ENCODE measurements at regions of chrX and their contacts with region 1.

Region 1: DNA sequence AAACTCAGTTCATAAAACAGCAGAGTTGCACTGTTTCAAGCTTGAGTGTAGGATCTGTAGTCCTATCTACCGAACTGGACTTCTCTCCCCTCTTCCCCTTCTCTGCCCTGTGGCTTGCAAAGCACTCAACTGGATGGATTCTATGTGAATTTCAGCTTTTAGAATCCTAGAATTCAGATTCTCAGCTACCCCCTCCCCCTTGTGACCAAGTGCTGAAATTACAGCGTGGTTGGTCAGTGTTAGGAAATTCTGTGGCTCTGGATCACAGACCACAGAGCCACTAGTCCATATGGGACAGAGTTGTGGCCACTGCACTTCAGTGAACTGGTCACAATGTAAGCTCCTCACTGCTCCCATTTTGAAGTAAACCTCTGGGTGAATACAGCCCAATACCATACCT is 64.6 kb upstream of the TRPC5 start:
- DNase-seq: peak; percentile 49
- H3K4me3 Mint-ChIP-seq: no peak overlapping the region
- H3K27ac Mint-ChIP-seq: no peak overlapping the region
- H3K4me1 Mint-ChIP-seq: no peaks in the 10 kb centered on the region
- H3K27me3 Mint-ChIP-seq: peaks cover 42% of the 10 kb centered on the region
- CTCF ChIP-seq: peak; percentile 54

Region 2: GRCh38 chrX:112190646-112191045 is 43.4 kb after region 1 on chrX:
- CTCF ChIA-PET with region 1: no interaction called
- POLR2A ChIA-PET with region 1: no interaction called
- intact Hi-C with region 1: no loop called
- DNase-seq: no peak
- H3K4me3 Mint-ChIP-seq: no peak overlapping the region
- H3K27ac Mint-ChIP-seq: no peak overlapping the region
- H3K4me1 Mint-ChIP-seq: no peaks in the 10 kb centered on the region
- H3K27me3 Mint-ChIP-seq: peaks cover 78% of the 10 kb centered on the region
- CTCF ChIP-seq: no peak

Region 3: GRCh38 chrX:112368373-112368772 is 221.2 kb after region 1 on chrX:
- CTCF ChIA-PET with region 1: no interaction called
- POLR2A ChIA-PET with region 1: no interaction called
- intact Hi-C with region 1: loop called (anchors 10 kb)
- DNase-seq: peak; percentile 18
- H3K4me3 Mint-ChIP-seq: no peak overlapping the region
- H3K27ac Mint-ChIP-seq: no peak overlapping the region
- H3K4me1 Mint-ChIP-seq: no peaks in the 10 kb centered on the region
- H3K27me3 Mint-ChIP-seq: peaks cover 63% of the 10 kb centered on the region
- CTCF ChIP-seq: peak; percentile 48

Measured in MCF 10A (cell line).